K562 (cell line): ENCODE measurements at regions of chr10 and their contacts with region 1.

Region 1: DNA sequence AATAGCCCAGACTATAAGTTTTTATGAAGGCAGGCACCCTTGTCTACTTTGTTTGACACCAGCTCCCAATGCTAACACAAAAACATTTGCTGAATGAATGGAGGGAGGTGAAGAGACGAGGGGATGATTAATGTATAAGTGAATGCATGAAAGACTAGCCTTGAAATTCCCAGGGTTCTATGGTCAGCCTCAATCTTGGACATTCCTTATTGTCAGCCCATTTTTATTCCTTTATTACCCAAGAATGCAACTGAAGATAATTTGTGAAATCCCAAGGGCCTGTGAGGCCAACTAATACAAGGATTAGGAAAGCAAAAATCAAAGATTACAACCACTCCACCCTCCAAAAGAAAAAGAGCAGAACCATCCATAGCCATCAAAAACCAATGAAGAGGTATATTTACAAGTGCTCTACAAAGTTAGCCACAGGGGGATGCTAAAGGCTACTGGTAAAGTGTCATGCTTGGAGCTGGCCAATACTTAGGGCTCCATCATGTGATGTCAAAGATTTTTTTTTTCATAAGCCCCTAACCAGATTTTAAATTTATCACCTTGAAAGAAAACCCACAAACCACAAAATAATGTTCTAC is 40.0 kb upstream of the ASAH2 start:
- DNase-seq: peak; percentile 42 to 68 (median 60)
- ATAC-seq: peak; percentile 88
- H3K4me3 ChIP-seq: no peak overlapping the region
- H3K27ac ChIP-seq: no peak overlapping the region
- H3K4me1 ChIP-seq: peaks cover 9 to 16% of the 10 kb centered on the region in 2 experiments; a peak in 3 of 5 replicates
- H3K27me3 ChIP-seq: no peaks in the 10 kb centered on the region
- CTCF ChIP-seq: peak; percentile 74 to 89 (median 76)
- EP300 ChIP-seq: no peak
- POLR2A ChIP-seq: no peak
- RAD21 ChIP-seq: peak; percentile 91 to 97

Region 2: GRCh38 chr10:50552771-50553535 is 261.6 kb after region 1 on chr10:
- CTCF ChIA-PET with region 1: no interaction called
- POLR2A ChIA-PET with region 1: no interaction called
- in situ Hi-C with region 1: no loop called
- intact Hi-C with region 1: loop called (anchors 5 kb)
- DNase-seq: peak in 2 of 4 experiments; percentile 41 to 77
- ATAC-seq: peak; percentile 43
- H3K4me3 ChIP-seq: no peak overlapping the region; the same call in 1 of the 2 replicates
- H3K27ac ChIP-seq: peak overlapping the region; percentile 23; the same call in 1 of the 3 replicates
- H3K4me1 ChIP-seq: peaks cover 34 to 63% of the 10 kb centered on the region in 2 experiments
- H3K27me3 ChIP-seq: no peaks in the 10 kb centered on the region
- CTCF ChIP-seq: peak; percentile 57 to 66 (median 60)
- EP300 ChIP-seq: peak; percentile 39; the same call in 1 of the 2 replicates
- POLR2A ChIP-seq: no peak
- RAD21 ChIP-seq: peak; percentile 57 to 68; a peak in 3 of 4 replicates